ENCODE measurements at regions of chrX and their contacts with region 1.

Region 1: DNA sequence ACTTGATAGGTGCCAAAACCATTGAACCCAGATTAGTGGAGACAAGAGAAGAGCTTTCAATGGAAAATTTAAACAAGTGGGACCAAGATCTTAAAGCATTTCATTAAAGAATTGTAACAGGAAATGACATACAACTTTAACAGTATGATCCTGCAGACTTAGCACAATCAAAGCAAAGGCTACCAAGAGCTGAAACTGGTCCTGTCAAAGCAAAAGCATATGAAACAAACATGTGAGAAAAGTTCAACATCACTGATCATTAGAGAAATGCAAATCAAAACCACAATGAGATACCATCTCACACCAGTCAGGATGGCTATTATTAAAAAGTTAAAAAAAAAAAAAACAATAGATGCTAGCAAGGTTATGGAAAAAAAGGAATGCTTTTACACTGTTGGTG is 425.6 kb downstream of the IL1RAPL1 start:
- DNase-seq: no peak
- H3K4me3 ChIP-seq: no peak overlapping the region
- H3K27ac ChIP-seq: no peak overlapping the region
- H3K4me1 ChIP-seq: no peaks in the 10 kb centered on the region
- H3K27me3 ChIP-seq: no peaks in the 10 kb centered on the region
- CTCF ChIP-seq: no peak
- POLR2A ChIP-seq: no peak

Region 2: GRCh38 chrX:27132862-27133261 is 1880.0 kb before region 1 on chrX:
- intact Hi-C with region 1: loop called (anchors 10 kb)
- DNase-seq: no peak
- H3K4me3 ChIP-seq: no peak overlapping the region
- H3K27ac ChIP-seq: no peak overlapping the region
- H3K4me1 ChIP-seq: no peaks in the 10 kb centered on the region
- H3K27me3 ChIP-seq: peaks cover 0 to 26% of the 10 kb centered on the region in 2 donors
- CTCF ChIP-seq: no peak
- POLR2A ChIP-seq: no peak

Region 3: DNA sequence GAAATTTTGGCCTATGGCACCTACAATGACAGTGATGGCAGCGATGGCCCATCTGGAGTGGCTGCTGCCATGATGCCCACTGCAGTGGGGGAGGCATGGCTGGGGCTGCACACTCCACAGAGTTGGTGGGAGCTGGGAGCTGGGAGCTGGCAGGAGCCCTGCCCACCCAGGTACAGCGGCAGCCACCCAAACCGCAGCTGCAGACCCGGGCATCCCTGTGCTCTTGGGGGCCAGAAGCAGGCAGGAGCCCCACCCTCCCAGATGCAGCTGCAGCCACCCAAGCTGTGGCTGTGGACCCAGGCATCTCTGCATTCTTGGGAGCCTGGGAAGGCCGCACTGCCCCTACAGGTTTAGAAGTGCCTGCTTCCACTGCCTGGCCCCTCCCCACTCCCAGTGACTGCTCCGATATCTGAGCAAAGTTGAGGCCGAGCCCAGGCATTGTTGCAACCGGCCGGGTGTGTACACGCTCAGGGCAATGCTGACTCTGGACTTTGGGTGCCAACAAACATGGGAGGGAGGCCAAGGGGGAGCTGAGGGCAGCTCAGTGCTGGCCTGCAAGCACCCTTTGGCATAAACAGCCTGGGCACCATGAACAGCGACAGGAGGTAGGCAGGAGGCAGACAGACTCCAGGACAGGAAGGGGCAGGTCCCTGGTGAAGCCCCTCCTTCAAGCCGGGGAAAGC is 1632.6 kb before region 1 on chrX:
- intact Hi-C with region 1: no loop called
- DNase-seq: no peak
- H3K4me3 ChIP-seq: no peak overlapping the region
- H3K27ac ChIP-seq: no peak overlapping the region
- H3K4me1 ChIP-seq: no peaks in the 10 kb centered on the region
- H3K27me3 ChIP-seq: peaks cover 0 to 13% of the 10 kb centered on the region in 2 donors
- CTCF ChIP-seq: no peak
- POLR2A ChIP-seq: no peak

Measured in breast epithelium (tissue), 4 donors.